ENCODE measurements at regions of chr3 and their contacts with region 1.

Region 1: GRCh38 chr3:138694287-138695007 is 85.9 kb downstream of the FAIM start:
- DNase-seq: no peak
- ATAC-seq: no peak
- H3K4me3 ChIP-seq: no peak overlapping the region
- H3K27ac ChIP-seq: no peak overlapping the region
- H3K4me1 ChIP-seq: no peaks in the 10 kb centered on the region
- H3K27me3 ChIP-seq: no peaks in the 10 kb centered on the region
- CTCF ChIP-seq: no peak

Region 2: DNA sequence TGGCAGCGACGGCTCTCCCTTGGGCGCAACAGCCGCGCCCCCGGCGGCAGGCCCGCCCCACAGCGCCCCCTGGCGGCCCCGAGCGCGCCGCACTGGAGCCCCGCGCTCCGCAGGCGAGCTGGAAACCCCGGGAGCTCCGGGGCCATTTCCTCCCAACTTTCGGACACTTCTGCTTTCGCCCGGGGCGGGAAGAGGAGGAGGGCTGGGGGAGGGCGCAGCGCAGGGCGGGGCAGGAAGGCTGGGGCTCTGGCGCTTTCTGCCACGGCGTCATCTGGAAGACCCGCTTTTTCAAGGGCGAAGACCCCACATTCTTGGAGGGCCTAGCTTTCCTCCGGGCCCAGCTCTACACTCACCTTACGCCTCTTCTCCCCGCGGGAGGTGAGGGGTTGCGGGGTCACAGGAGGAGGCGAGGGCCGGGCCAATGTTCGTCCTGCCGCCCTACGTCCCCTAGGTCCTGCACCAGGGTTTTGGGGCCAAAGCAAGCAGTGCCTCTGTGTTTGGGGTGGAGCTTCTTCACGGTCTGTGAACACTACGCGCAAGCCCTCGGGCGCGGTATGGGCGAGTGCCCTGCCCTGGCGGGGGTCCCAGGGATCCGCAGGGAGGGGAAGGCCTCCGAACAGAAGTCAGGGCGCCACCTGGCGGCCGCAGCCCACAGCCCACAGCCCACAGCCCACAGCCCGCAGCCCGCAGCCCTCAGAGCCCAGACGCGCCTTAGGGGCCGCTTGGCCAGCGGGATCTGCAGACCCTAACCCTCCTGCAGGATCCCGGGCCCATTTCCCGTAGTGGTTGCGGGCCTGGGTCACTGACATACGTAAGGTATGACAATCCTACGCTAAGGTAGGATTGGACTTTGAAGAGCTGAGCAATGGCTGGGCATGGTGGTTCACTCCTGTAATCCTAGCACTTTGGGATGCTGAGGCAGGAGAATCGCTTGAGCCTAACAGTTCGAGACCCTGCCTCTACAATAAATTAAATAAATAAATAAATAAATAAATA is 221.4 kb after region 1 on chr3:
- intact Hi-C with region 1: loop called (anchors 2 kb)
- DNase-seq: peak; percentile 95 to 98
- ATAC-seq: peak; percentile 96 to 98 (median 97)
- H3K4me3 ChIP-seq: peak overlapping the region; percentile 81
- H3K27ac ChIP-seq: peak overlapping the region; percentile 94
- H3K4me1 ChIP-seq: no peaks in the 10 kb centered on the region
- H3K27me3 ChIP-seq: no peaks in the 10 kb centered on the region
- CTCF ChIP-seq: peak; percentile 98

Region 3: DNA sequence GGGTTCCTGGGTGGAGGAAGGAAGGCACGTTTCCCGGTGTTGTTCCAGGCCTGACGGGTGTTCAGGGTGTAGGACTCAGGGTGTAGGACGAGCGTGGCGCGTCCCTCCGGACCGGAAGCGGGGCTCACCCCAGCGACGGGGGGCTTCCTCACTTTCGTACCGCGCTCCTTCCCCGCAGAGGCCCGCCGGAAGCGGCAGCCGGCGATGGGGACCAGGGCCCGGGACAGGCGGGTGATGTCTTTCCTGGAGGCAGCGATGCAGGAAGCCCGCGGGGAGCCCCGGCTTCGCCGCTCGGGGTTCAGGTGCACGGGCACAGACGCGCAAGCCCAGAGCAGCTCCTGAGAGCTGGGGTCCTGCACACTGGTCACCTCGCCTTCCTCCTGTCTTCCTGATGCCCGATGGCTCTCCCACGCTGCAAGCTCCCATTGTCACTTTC is 266.0 kb after region 1 on chr3:
- intact Hi-C with region 1: no loop called
- DNase-seq: no peak
- ATAC-seq: no peak
- H3K4me3 ChIP-seq: no peak overlapping the region
- H3K27ac ChIP-seq: no peak overlapping the region
- H3K4me1 ChIP-seq: no peaks in the 10 kb centered on the region
- H3K27me3 ChIP-seq: peaks cover 0 to 74% (median 16%) of the 10 kb centered on the region in 3 donors
- CTCF ChIP-seq: no peak

Measured in psoas muscle (tissue), 8 donors.